HCT116 (cell line): ENCODE measurements at regions of chr2 and their contacts with region 1.

Region 1: DNA sequence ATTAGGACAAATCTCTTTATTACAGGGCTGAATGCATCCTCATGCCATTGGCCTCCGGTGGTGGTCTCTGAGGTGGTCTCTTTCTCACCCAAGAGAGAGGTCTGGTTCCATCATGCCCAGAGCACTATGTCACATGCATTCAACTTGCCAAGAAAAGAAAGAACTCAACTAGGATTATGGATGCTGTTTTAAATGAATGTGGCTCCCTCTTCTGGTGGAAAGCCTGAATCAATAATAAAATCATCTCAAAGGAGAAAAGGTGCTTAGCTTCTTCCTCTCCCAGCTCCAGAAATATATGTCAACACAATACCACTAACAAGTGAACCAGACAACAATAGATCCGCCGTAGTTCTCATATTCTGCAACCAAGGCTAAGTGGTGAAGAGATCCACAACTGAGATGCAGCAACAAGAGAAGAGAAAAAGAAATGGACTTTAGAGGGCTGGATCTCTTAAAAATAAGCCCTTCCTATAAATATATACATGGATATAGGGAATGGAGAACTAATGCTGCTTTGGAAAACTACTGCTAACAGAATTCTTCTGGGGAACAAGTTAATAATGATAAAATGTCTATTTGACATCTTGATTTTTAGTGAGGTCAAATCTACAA is 396.8 kb downstream of the NCKAP5 start:
- DNase-seq: peak; percentile 48
- ATAC-seq: peak; percentile 54; the same call in 1 of the 2 replicates
- H3K4me3 ChIP-seq: no peak overlapping the region
- H3K27ac ChIP-seq: no peak overlapping the region
- H3K4me1 ChIP-seq: no peaks in the 10 kb centered on the region
- H3K27me3 ChIP-seq: no peaks in the 10 kb centered on the region; the same call in 1 of the 2 replicates
- CTCF ChIP-seq: peak; percentile 44 to 65 (median 44); a peak in 5 of 6 replicates
- POLR2A ChIP-seq: no peak
- RAD21 ChIP-seq: peak; percentile 77

Region 2: GRCh38 chr2:132267105-132267497 is 904.4 kb before region 1 on chr2:
- CTCF ChIA-PET with region 1: no interaction called
- POLR2A ChIA-PET with region 1: no interaction called
- RAD21 ChIA-PET with region 1: no interaction called
- intact Hi-C with region 1: loop called (anchors 1 kb)
- DNase-seq: no peak
- ATAC-seq: no peak
- H3K4me3 ChIP-seq: no peak overlapping the region
- H3K27ac ChIP-seq: no peak overlapping the region
- H3K4me1 ChIP-seq: peaks cover 0 to 6% of the 10 kb centered on the region in 2 experiments; a peak in 2 of 4 replicates
- H3K27me3 ChIP-seq: peaks cover 13% of the 10 kb centered on the region
- CTCF ChIP-seq: no peak
- POLR2A ChIP-seq: no peak
- RAD21 ChIP-seq: no peak

Region 3: DNA sequence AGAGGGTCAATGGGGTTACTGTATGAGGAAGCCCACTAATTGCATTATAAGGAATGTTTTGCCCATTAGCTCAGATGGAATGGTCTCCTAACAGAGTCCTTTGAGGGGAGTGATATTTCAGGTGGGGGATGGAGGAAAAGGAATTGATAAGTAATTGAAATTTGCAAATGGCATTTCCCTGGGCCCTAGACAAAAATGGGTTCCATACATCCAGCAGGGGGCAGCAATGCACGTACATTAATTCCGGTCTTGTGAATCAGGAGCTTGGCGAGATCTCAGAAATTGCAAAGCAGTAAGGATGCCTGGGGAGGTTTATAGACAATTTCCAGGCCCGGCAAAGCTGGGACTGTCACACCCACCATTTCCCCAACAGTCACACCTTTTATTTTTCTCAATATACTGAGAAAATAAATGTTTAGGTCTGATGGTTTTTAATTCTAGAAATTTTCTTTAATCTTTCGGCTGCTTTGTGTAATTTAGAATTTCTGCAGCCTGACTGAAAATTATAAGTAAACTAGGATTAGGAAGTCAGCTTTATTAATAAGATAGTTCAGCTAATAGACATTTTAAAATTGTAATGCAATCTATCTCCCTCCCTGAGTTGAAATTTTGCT is 624.3 kb before region 1 on chr2:
- CTCF ChIA-PET with region 1: interaction called, 13 read pairs
- POLR2A ChIA-PET with region 1: no interaction called
- RAD21 ChIA-PET with region 1: interaction called, 3 to 4 read pairs
- intact Hi-C with region 1: loop called (anchors 1 kb)
- DNase-seq: peak; percentile 36
- ATAC-seq: peak; percentile 68
- H3K4me3 ChIP-seq: no peak overlapping the region
- H3K27ac ChIP-seq: no peak overlapping the region
- H3K4me1 ChIP-seq: no peaks in the 10 kb centered on the region
- H3K27me3 ChIP-seq: no peaks in the 10 kb centered on the region
- CTCF ChIP-seq: peak; percentile 39 to 73 (median 57); a peak in 5 of 6 replicates
- POLR2A ChIP-seq: no peak
- RAD21 ChIP-seq: peak; percentile 70

Region 4: GRCh38 chr2:132670496-132671150 is 500.9 kb before region 1 on chr2:
- CTCF ChIA-PET with region 1: no interaction called
- POLR2A ChIA-PET with region 1: no interaction called
- RAD21 ChIA-PET with region 1: no interaction called
- intact Hi-C with region 1: loop called (anchors 10 kb)
- DNase-seq: no peak
- ATAC-seq: peak; percentile 76
- H3K4me3 ChIP-seq: peak overlapping the region; percentile 6 to 17; a peak in 2 of 4 replicates
- H3K27ac ChIP-seq: no peak overlapping the region
- H3K4me1 ChIP-seq: peaks cover 10 to 18% of the 10 kb centered on the region in 2 experiments
- H3K27me3 ChIP-seq: peaks cover 72% of the 10 kb centered on the region
- CTCF ChIP-seq: no peak
- POLR2A ChIP-seq: no peak
- RAD21 ChIP-seq: no peak